ENCODE measurements at regions of chr10 and their contacts with region 1.

Region 1: GRCh38 chr10:79266543-79267312 is 80.5 kb upstream of the PPIF start:
- DNase-seq: no peak
- H3K4me3 Mint-ChIP-seq: no peak overlapping the region
- H3K27ac Mint-ChIP-seq: peak overlapping the region; percentile 62
- H3K4me1 Mint-ChIP-seq: peaks cover 31% of the 10 kb centered on the region
- H3K27me3 Mint-ChIP-seq: no peaks in the 10 kb centered on the region

Region 2: DNA sequence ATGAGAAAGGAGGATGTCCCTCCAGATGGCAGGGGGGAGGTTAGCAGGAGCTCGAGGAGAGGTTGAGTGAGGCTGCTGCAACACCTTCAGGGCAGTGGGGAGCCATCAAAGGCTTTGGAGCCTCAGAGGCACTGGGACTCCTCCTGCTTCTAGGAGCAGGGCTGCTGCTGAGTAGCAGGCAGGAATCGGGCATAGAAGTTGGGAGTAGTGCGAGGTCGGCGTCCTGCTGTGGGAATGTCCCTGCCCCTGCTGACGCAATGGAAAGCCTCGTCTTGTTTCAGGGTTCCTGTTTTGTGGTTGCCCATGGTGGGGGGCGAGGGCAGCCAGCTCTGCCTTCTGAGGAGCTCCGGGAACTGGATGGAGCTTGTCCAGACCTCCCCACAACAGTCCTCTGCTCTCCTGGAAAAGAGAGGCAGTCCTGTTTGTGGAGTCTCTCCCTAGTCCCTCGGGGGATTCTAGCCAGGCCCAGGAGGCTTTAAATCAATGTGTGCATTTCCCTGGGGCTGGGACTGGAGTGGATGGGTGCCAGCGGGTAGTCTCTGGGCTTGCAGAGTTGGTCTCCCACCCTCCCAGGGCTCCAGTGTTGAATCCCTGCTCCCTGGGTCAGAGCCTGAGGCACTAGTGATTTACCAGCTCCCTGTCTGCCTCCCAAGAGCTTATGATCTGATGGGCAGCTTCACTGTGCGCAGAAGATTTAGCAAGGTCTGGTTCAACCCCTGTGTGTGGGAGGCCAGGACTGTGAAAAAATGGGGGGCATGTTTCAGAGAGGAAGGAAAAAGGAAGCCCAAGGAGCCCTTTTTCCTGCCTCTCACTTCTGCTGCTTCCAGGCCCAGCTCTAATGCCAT is 18.2 kb before region 1 on chr10:
- intact Hi-C with region 1: loop called (anchors 1 kb)
- DNase-seq: no peak
- H3K4me3 Mint-ChIP-seq: peak overlapping the region; percentile 78
- H3K27ac Mint-ChIP-seq: peak overlapping the region; percentile 92
- H3K4me1 Mint-ChIP-seq: peaks cover 67% of the 10 kb centered on the region
- H3K27me3 Mint-ChIP-seq: no peaks in the 10 kb centered on the region

Region 3: GRCh38 chr10:79502561-79503309 is 236.0 kb after region 1 on chr10:
- intact Hi-C with region 1: no loop called
- DNase-seq: no peak
- H3K4me3 Mint-ChIP-seq: no peak overlapping the region
- H3K27ac Mint-ChIP-seq: no peak overlapping the region
- H3K4me1 Mint-ChIP-seq: peaks cover 11% of the 10 kb centered on the region
- H3K27me3 Mint-ChIP-seq: peaks cover 37% of the 10 kb centered on the region